Esophagus muscularis mucosa (tissue), 4 donors: ENCODE measurements at regions of chr5 and their contacts with region 1.

Region 1: DNA sequence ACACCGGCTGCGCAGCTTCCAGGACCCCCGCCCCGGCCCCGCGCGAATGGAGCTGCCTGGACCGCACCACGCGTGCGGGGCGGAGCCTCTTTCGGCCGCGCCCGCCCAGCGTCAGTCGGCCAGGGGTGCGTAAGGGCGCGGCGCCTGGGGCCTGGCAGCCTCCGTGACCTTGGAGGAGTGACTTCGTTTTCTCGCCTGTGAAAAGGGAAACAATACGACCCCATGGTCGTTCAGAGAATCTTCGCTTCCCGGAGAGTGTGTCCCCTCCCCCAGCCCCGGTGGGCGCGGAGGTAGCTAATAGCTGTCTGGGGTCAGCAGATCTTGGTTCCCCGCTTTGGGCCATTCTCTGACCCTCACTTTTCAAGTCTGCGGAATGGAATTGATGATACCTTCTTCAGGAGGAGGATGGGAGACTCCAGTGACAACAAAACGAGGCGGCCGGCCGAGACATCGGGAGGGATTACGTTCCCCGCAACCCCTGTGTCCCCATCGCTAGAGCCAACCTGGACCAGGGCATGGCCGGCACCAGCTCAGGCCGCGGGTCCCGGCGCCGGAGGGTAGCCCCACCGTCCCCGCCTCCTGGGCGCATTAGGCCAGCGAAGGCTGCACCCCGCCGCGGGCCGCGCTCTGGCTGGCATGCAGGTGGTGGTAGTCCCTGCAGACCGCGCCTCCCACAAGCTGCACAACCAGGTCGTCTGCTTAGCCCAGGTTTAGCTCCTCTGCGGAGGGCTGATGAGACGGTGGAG is 5.5 kb upstream of the CDHR2 start:
- DNase-seq: no peak
- H3K4me3 ChIP-seq: peak overlapping the region; percentile 71 to 84 (median 80)
- H3K27ac ChIP-seq: peak overlapping the region; percentile 90 to 93 (median 90)
- H3K4me1 ChIP-seq: peaks cover 20 to 64% (median 57%) of the 10 kb centered on the region in 4 donors
- H3K27me3 ChIP-seq: no peaks in the 10 kb centered on the region
- CTCF ChIP-seq: no peak
- EP300 ChIP-seq: no peak
- POLR2A ChIP-seq: peak; percentile 39

Region 2: GRCh38 chr5:176415952-176416924 is 127.4 kb before region 1 on chr5 and contains the start of gene CLTB:
- intact Hi-C with region 1: loop called (anchors 10 kb)
- DNase-seq: peak; percentile 96
- H3K4me3 ChIP-seq: peak within 1 kb of the TSS; percentile 71 to 98 (median 95)
- H3K27ac ChIP-seq: peak within 1 kb of the TSS; percentile 86 to 98 (median 96)
- H3K4me1 ChIP-seq: peaks cover 44 to 52% (median 50%) of the 10 kb centered on the region in 4 donors
- H3K27me3 ChIP-seq: no peaks in the 10 kb centered on the region
- CTCF ChIP-seq: peak; percentile 80 to 96 (median 83)
- EP300 ChIP-seq: no peak
- POLR2A ChIP-seq: no peak
- total RNA-seq, gene CLTB: 220 to 267 (median 239) TPM

Region 3: DNA sequence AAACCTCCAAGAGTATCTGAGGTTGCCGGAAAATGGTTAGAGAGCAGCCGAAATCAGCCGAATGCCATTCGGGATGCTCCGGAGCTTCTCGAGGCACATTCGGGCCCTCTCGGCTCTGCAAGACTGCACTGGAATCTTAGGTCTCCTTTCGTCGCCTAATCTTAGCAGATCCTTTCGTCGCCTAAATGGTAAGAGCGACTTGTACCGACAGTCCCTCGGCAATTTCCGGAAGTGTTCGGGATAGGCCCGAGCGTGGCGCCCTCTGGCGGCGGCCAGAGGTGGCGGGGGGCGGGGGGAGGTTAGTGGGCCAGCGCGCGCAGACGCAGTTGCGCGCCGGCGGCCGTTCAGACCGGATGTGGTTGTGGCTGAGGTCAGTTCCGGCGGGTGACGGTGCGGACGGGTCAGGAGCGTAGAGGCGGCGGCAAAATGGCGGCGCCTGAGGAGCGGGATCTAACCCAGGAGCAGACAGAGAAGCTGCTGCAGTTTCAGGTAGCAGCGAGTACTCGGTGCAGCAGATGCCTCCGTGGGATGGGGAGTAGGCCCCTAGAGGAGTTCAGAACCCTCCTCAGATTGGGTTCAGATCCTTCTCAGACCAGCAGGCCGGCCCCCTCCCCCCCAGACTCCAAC is 95.5 kb before region 1 on chr5 and contains the start of gene FAF2:
- intact Hi-C with region 1: loop called (anchors 5 kb)
- DNase-seq: peak; percentile 100
- H3K4me3 ChIP-seq: peak within 1 kb of the TSS; percentile 85 to 97 (median 88)
- H3K27ac ChIP-seq: peak within 1 kb of the TSS; percentile 95 to 99 (median 96)
- H3K4me1 ChIP-seq: peaks cover 26 to 48% (median 42%) of the 10 kb centered on the region in 4 donors
- H3K27me3 ChIP-seq: no peaks in the 10 kb centered on the region
- CTCF ChIP-seq: peak in 2 of 3 experiments; percentile 98 to 99
- EP300 ChIP-seq: no peak
- POLR2A ChIP-seq: peak; percentile 81
- total RNA-seq, gene FAF2: 21.2 to 27.3 (median 23.9) TPM

Region 4: GRCh38 chr5:176647030-176647866 is 103.6 kb after region 1 on chr5 and contains the start of gene TSPAN17:
- intact Hi-C with region 1: loop called (anchors 5 kb)
- DNase-seq: peak; percentile 100
- H3K4me3 ChIP-seq: peak within 1 kb of the TSS; percentile 78 to 85 (median 84)
- H3K27ac ChIP-seq: peak within 1 kb of the TSS; percentile 80 to 87 (median 83)
- H3K4me1 ChIP-seq: peaks cover 17 to 47% (median 39%) of the 10 kb centered on the region in 4 donors
- H3K27me3 ChIP-seq: no peaks in the 10 kb centered on the region
- CTCF ChIP-seq: peak; percentile 20 to 46 (median 25)
- EP300 ChIP-seq: no peak
- POLR2A ChIP-seq: no peak
- total RNA-seq, gene TSPAN17: 8.3 to 18.6 (median 14.8) TPM

Region 5: GRCh38 chr5:176837707-176838115 is 294.1 kb after region 1 on chr5:
- intact Hi-C with region 1: no loop called
- DNase-seq: no peak
- H3K4me3 ChIP-seq: no peak overlapping the region
- H3K27ac ChIP-seq: no peak overlapping the region
- H3K4me1 ChIP-seq: no peaks in the 10 kb centered on the region
- H3K27me3 ChIP-seq: peaks cover 0 to 54% (median 0%) of the 10 kb centered on the region in 4 donors
- CTCF ChIP-seq: no peak
- EP300 ChIP-seq: no peak
- POLR2A ChIP-seq: no peak